Activated CD4-positive, alpha-beta T cell treated with anti-CD3 and anti-CD28 coated beads, Interleukin-2, amount 10 ng/mL, durations not matched to agents 24 days and 14 days (primary cell): ENCODE measurements at regions of chr2 and their contacts with region 1.

Region 1: GRCh38 chr2:176997074-176997791 is 215.4 kb upstream of the HNRNPA3 start:
- DNase-seq: peak; percentile 61
- H3K4me3 Mint-ChIP-seq: no peak overlapping the region
- H3K27ac Mint-ChIP-seq: peak overlapping the region; percentile 83
- H3K4me1 Mint-ChIP-seq: peaks cover 15% of the 10 kb centered on the region
- H3K27me3 Mint-ChIP-seq: peaks cover 10% of the 10 kb centered on the region

Region 2: GRCh38 chr2:176931588-176932563 is 65.4 kb before region 1 on chr2:
- intact Hi-C with region 1: loop called (anchors 1 kb)
- DNase-seq: peak; percentile 80
- H3K4me3 Mint-ChIP-seq: peak overlapping the region; percentile 37
- H3K27ac Mint-ChIP-seq: peak overlapping the region; percentile 85
- H3K4me1 Mint-ChIP-seq: peaks cover 15% of the 10 kb centered on the region
- H3K27me3 Mint-ChIP-seq: no peaks in the 10 kb centered on the region